Right ventricle myocardium superior (tissue), 1 donor: ENCODE measurements at regions of chr10 and their contacts with region 1.

Region 1: DNA sequence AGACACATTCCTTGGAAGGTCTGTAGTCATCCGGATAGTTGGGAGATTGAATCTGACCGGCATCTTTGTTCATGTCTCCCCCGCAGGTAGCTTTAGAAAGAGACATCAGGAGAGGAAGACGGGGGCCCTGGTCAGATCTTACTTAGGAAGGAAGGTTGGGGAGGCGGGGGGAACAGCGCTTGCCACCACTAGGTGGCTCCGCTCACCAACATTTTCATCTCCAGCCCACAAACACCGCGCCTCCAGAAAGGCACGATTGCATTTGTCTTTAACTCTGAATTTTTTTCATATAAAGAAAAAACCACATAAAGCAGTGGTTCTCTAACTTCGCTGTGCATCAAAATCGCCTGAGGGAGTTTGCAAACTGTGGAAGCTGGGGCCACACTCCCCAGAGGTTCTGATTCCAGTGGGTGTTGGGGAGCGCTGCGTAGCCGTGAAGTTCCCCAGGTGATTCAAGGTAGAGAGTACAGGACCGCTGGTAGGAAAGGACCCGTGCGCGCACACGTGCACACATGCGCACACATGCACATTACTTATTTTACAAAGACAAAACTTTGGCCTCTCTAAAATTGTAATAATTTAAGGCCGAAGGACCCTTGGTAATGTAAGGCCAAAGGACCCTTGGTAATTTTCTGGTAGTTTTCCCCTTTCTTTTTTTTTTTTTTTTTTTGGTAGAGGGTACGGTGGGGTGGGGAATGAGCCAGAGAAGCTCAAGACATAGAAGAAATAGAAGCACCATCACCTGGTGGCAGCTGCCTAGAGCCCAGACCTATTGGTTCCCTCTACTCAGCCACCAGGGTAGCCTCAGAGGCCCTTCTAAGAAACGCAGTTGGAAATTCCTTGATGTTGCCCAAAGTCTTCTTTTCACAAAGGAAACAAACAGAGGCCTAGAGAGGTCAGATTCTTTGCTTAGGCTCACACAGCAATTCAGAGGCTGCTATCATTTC is 37.4 kb upstream of the OPALIN start:
- DNase-seq: peak; percentile 82
- ATAC-seq: peak; percentile 78

Region 2: DNA sequence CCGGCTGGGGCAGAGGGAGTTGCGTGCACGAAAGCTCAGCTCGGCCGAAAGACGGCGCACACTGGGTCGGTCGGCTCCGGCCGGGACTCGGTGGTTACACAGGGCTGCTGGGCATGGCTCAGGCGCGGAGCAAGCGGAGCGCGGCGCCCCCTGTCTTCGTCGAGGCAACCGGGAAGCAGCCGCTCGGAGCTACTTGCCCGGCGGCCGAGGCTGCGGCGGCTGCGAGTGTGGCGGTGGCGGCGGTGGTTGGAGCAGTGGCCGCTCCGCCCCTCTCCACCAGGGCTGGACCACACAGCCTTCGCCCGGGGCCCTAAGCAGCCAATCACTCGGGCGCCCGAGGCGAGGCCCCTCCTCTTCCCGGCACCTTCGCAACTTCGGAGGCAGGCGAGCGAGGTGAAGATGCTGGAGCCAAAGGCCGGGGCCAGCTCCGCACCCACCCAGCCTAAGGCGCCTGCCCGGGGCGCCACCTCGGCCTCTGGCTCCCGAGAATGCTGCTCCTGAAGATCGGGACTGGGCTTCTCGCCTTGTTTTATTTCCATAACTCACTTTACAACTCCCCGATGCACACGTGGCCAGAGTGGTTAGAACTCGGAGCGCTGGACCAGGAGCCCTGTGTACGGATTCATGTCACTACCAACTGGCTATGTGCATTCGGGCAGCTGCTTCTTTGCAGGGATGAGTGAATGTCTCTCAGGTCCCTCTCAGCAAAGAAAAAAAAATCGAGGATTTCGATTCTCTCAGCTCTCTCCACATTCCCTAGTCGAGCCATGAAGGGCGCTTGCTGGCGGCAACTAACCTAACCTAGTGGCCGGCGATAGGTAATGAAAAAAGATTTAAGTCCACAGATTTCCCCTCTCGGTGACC is 117.7 kb after region 1 on chr10 and contains the start of gene TLL2:
- intact Hi-C with region 1: loop called (anchors 5 kb)
- DNase-seq: peak; percentile 94
- ATAC-seq: peak; percentile 96
- total RNA-seq, gene TLL2: 8.7 TPM

Region 3: DNA sequence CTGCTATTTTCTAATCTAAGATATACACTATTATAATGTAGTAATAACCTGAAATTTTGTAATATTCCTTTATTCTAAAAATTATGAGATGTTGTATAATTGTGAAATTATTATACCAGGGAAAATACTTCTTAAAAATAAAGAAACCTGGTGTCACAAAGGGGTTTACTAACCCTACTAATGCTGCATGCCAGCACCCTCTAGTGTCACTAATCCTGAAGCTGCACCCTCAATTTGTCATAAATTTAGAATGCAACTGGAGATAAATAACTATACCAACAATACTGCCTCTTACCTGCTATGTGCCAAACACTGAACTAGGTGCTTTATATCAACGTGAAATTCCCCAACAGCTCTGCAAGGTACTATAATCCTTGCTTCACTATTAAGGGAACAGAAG is 159.8 kb after region 1 on chr10:
- intact Hi-C with region 1: loop called (anchors 10 kb)
- DNase-seq: no peak
- ATAC-seq: peak; percentile 70

Region 4: GRCh38 chr10:96642973-96643372 is 246.8 kb after region 1 on chr10:
- intact Hi-C with region 1: no loop called
- DNase-seq: peak; percentile 88
- ATAC-seq: peak; percentile 69